Right ventricle myocardium superior (tissue), 1 donor: ENCODE measurements at regions of chr9 and their contacts with region 1.

Region 1: DNA sequence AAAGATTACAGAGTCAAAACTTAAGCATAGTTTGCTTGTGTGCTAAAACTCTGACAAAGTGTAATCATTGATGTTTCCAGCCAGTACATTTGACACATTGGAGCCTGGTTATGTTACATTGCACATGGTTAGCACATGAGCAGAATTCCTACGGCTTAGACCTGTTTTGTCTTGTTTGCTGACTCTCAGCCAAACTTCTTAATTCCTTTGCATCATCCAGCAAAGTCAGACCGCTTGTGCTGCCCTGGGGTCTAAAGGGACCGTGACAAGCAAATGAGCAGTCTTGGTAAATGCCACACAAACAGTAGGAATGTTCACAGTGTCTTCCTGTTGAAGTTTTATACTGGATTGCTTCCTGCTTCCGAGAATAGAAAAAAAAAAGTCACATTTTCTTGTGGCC is 72.0 kb upstream of the ENTREP1 start:
- DNase-seq: no peak
- ATAC-seq: no peak

Region 2: DNA sequence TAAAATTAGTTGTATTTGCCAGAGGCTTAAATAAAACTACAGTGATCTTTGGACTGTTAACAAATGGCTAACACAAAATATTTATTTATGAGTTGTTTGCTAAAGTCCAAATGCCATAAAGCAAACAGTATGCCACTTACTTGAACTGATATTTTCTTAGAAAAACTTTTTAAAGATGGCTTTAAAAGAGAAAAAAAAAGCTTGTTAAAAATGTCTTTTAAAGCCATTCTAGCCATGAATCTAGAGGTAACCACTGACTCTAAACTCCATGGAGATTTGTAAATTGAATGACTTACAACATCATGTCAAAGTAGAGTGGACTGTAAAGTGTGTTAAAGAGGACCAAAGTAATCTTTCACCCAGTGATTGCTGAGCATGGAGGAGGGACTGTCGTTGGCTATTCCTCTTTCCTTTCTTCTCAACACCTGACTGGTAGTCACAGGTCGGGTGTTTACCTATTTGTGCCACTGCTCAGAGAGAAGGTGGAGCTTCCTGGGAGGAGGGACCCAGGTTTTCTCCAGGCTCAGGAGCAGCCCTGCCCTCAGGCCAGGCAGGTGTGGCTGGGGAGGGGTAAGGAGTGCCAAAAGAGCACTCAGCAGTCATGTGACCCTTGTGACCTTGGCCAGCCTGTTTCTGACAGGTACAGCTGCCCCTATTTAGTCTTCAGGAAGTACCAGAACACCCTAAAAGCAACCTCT is 148.1 kb before region 1 on chr9:
- intact Hi-C with region 1: no loop called
- DNase-seq: no peak
- ATAC-seq: peak; percentile 64

Region 3: GRCh38 chr9:69324549-69325401 is 71.7 kb after region 1 on chr9 and contains the start of gene ENTREP1:
- intact Hi-C with region 1: loop called (anchors 10 kb)
- DNase-seq: peak; percentile 78
- ATAC-seq: peak; percentile 95
- total RNA-seq, gene ENTREP1: 18.7 TPM